ENCODE measurements at regions of chr7 and their contacts with region 1.

Region 1: GRCh38 chr7:93092757-93093370 is 24.9 kb downstream of the SAMD9 start:
- DNase-seq: no peak
- ATAC-seq: peak; percentile 74
- H3K4me3 ChIP-seq: no peak overlapping the region
- H3K27ac ChIP-seq: no peak overlapping the region
- H3K4me1 ChIP-seq: no peaks in the 10 kb centered on the region
- H3K27me3 ChIP-seq: no peaks in the 10 kb centered on the region
- CTCF ChIP-seq: peak in 1 of 2 donors; percentile 13

Region 2: DNA sequence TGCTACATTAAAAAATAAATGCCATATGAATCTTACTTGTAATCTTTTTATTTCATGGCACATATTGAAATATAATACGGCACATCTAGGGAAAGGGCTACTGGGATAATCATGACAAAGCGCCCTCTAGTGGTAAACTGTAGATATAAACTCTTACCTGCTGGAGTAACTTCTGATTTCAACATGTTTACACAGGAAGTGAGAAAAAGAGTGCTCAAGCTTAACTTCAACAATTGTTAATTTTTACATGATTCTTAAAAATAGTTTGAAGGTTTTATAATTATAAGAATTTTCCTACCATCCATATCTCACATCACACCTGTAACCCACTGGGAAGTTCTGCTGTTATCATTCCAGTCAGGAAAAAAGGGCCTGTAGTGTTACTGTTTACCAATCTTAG is 135.4 kb after region 1 on chr7:
- intact Hi-C with region 1: loop called in 1 of 2 experiments (anchors 5 kb)
- DNase-seq: peak in 1 of 4 donors; percentile 64
- ATAC-seq: peak; percentile 25
- H3K4me3 ChIP-seq: no peak overlapping the region
- H3K27ac ChIP-seq: no peak overlapping the region
- H3K4me1 ChIP-seq: peaks cover 0 to 25% of the 10 kb centered on the region in 2 donors
- H3K27me3 ChIP-seq: no peaks in the 10 kb centered on the region
- CTCF ChIP-seq: peak; percentile 71 to 75

Measured in left lung (tissue), 14 donors.